PC-3 (cell line): ENCODE measurements at regions of chr19 and their contacts with region 1.

Region 1: GRCh38 chr19:35140962-35141637 is 2.0 kb upstream of the FXYD7 start:
- DNase-seq: peak; percentile 82
- ATAC-seq: peak; percentile 82
- H3K4me3 ChIP-seq: peak overlapping the region; percentile 43
- H3K27ac ChIP-seq: no peak overlapping the region
- H3K4me1 ChIP-seq: 0 out of 2 replicates have a peak, but pooled peaks cover 11% of the 10 kb centered on the region
- H3K27me3 ChIP-seq: no peaks in the 10 kb centered on the region
- CTCF ChIP-seq: peak; percentile 39; the same call in 1 of the 2 replicates

Region 2: DNA sequence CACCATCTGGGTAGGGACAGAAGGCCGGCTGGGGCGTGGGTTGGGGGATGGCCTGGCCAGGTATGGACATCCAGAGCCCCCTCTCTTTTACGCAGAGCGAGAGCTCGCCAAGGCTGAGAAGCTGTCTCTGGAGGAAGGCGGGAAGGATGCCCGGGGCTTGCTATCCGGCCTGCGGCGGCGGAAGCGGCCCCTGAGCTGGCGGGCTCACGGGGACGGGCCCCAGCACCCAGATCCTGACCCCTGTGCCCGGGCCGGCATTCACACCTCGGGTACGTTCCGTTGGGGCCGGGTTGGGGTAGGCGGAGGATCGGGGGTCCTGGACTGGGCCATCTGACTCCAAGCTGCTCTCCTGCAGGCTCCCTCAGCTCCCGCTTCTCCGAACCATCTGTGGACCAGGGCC is 119.5 kb before region 1 on chr19:
- CTCF ChIA-PET with region 1: interaction called, 15 read pairs
- POLR2A ChIA-PET with region 1: no interaction called
- intact Hi-C with region 1: no loop called
- DNase-seq: no peak
- ATAC-seq: no peak
- H3K4me3 ChIP-seq: no peak overlapping the region
- H3K27ac ChIP-seq: no peak overlapping the region
- H3K4me1 ChIP-seq: no peaks in the 10 kb centered on the region
- H3K27me3 ChIP-seq: no peaks in the 10 kb centered on the region
- CTCF ChIP-seq: no peak

Region 3: DNA sequence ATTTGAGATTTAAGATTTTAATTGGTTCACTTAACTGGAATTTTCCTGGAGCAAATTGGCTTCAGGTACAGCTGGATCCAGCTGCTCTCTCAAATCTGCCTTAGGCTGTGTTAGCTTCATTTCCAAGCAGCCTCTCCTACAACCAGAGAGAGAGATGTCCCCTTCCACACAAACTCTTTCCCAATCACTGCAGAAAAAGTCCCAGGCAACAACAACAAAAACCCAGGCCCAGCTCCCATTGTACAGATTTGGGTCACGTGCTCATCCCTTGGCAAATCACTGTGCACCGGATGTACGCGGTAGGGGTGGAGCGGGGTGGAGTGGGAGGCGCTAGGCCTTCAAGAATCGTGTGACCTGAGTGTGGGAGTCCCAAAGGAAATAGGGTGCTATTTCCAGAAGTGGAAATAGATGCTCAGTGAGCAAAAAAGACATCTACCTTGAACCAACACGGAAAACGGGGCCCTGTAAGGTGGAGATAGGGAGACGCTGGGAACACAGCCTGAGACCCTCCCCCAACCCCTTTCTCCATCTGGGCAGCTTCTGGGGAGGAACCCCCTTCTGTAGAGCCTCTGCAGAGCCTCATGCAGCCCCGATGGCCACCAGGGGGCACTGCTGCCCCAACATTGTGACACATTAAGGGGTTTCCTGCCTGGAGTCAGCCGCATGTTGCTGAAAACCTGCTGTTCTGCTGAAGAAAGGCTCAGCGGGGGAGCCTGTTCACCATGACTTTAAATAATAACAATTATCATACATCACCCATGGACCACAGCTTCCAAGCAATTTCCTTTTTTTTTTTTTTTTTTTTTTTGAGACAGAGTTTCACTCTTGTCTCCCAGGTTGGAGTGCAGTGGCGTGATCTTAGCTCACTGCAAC is 74.2 kb before region 1 on chr19:
- CTCF ChIA-PET with region 1: interaction called, 6 read pairs
- POLR2A ChIA-PET with region 1: no interaction called
- intact Hi-C with region 1: loop called (anchors 5 kb)
- DNase-seq: peak; percentile 86
- ATAC-seq: peak; percentile 72
- H3K4me3 ChIP-seq: no peak overlapping the region
- H3K27ac ChIP-seq: no peak overlapping the region
- H3K4me1 ChIP-seq: peaks cover 18% of the 10 kb centered on the region
- H3K27me3 ChIP-seq: no peaks in the 10 kb centered on the region
- CTCF ChIP-seq: peak; percentile 85

Region 4: GRCh38 chr19:35247526-35248306 is 106.6 kb after region 1 on chr19:
- CTCF ChIA-PET with region 1: no interaction called
- POLR2A ChIA-PET with region 1: interaction called, 5 read pairs
- intact Hi-C with region 1: loop called (anchors 10 kb)
- DNase-seq: peak; percentile 89
- ATAC-seq: peak; percentile 73
- H3K4me3 ChIP-seq: peak overlapping the region; percentile 92
- H3K27ac ChIP-seq: peak overlapping the region; percentile 90
- H3K4me1 ChIP-seq: peaks cover 14% of the 10 kb centered on the region
- H3K27me3 ChIP-seq: no peaks in the 10 kb centered on the region
- CTCF ChIP-seq: peak; percentile 46